ENCODE measurements at regions of chr11 and their contacts with region 1.

Region 1: DNA sequence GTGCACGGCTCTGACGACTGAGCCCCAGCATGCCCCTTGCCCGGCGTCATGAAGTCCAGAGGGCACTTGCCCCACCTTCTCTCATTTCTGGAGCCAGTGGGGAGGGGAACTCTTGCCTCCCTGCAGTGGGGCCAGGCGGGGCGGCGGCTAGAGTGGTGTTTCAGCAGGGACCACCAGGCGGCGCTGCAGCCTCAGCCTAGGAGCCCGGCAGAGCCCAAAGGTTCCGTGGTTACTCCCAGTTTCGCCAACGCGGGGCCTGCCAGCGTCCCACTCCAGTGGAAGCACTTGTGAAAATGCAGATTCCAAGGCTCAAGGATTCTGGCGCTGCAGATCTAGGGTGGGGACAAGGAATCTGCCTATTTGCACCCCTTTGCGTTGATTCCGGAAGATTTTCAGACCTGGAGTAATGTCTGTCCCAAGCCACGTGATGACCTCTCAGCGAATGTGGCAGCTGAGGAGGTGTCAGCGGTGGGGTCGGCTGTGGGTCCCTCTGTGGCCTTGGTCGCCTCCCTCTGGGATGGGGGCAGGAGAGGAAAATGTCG is 55.7 kb downstream of the CD82 start:
- DNase-seq: peak; percentile 74
- H3K4me3 ChIP-seq: peak overlapping the region; percentile 17
- H3K27ac ChIP-seq: no peak overlapping the region
- H3K4me1 ChIP-seq: no peaks in the 10 kb centered on the region
- H3K27me3 ChIP-seq: no peaks in the 10 kb centered on the region
- CTCF ChIP-seq: peak; percentile 96

Region 2: DNA sequence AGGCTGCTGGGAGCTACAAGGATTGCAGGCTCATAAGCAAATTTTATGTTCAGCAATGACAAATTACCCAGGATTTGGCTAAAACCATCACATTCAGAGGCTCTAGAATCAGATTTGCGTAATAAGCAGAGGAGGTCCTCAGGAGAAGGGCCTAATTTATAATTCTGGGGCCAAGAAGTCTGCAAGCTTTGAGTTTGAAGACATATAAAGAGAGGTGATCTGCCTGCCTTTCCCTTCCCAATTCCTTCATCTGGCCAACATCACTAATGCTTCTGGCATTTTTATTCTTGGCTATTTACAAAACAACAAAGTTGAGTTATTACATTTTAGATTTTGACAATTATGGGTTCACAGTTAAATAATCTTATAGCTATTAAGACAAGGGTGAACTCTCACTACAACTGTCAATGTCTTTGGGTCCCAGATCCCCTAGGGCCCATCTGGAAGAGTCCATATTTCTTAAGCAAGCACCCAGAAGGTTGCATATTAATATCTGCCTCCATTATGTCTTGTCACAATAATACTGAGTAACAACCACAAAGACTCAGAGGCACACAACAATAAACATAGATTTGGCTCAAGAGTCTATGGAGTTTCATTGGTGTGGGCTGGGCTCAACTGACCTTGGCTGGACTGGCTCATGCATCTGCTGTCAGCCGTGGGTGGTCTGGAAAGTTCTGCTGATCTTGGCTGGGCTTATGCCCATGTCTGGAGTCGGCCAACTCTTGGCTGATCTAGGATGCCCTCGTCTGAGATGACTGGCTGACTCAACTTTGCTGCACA is 122.9 kb before region 1 on chr11:
- intact Hi-C with region 1: no loop called
- DNase-seq: no peak
- H3K4me3 ChIP-seq: no peak overlapping the region
- H3K27ac ChIP-seq: no peak overlapping the region
- H3K4me1 ChIP-seq: no peaks in the 10 kb centered on the region
- H3K27me3 ChIP-seq: no peaks in the 10 kb centered on the region
- CTCF ChIP-seq: no peak

Region 3: GRCh38 chr11:44556735-44557409 is 64.3 kb before region 1 on chr11:
- intact Hi-C with region 1: loop called (anchors 2 kb)
- DNase-seq: peak; percentile 72
- H3K4me3 ChIP-seq: no peak overlapping the region
- H3K27ac ChIP-seq: no peak overlapping the region
- H3K4me1 ChIP-seq: no peaks in the 10 kb centered on the region
- H3K27me3 ChIP-seq: no peaks in the 10 kb centered on the region
- CTCF ChIP-seq: peak; percentile 69

Region 4: DNA sequence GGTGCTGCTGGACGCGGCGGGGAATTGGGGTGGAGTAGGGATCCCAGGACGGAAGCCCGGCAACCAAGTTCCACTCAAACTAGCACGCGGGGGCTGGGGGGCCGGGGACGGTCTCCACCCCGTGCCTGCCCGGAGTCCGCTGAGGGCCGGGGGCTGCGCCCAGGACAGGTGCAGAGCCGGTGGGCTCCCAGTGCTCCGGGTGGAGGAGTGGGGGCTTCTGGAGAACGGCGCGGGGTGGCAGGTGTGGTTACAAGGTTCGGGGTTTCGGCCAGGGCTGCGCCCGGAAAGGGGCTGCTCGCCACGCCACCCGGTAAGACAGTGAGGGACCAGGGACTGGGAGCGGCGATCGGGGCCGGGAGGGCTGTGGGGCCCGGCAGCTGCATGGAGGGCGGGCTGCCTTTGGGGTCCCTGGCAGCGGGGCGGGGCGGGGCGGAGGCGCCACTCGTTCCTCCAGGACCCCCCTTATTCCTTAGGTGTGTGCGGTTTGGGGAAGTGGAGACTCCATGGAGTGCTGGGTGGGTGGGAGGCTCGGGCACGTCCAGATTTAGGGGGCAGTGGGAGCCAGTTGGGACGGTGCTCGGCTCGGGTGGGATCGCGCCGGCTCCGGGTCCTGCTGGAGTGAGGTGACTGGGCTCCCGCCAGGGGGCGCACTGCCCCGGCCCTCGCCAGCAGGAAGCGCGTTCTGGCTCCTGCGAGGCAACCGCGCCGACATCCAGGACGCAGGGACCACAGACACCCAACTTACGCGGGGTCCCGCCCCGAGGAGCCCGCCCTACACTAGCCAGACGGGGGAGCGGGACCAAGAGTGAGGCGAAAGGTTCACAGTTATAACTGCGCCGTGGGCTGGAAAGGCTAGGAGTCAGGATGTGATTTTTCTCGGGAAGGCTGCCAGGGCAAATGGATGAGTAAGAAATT is 106.4 kb after region 1 on chr11:
- intact Hi-C with region 1: loop called (anchors 10 kb)
- DNase-seq: peak; percentile 75
- H3K4me3 ChIP-seq: peak overlapping the region; percentile 54
- H3K27ac ChIP-seq: no peak overlapping the region
- H3K4me1 ChIP-seq: no peaks in the 10 kb centered on the region
- H3K27me3 ChIP-seq: peaks cover 4% of the 10 kb centered on the region
- CTCF ChIP-seq: peak; percentile 93

Region 5: GRCh38 chr11:44747316-44747715 is 126.1 kb after region 1 on chr11:
- intact Hi-C with region 1: no loop called
- DNase-seq: no peak
- H3K4me3 ChIP-seq: no peak overlapping the region
- H3K27ac ChIP-seq: no peak overlapping the region
- H3K4me1 ChIP-seq: no peaks in the 10 kb centered on the region
- H3K27me3 ChIP-seq: no peaks in the 10 kb centered on the region
- CTCF ChIP-seq: no peak

Region 6: GRCh38 chr11:44775366-44775984 is 154.3 kb after region 1 on chr11:
- intact Hi-C with region 1: loop called (anchors 5 kb)
- DNase-seq: peak; percentile 64
- H3K4me3 ChIP-seq: no peak overlapping the region
- H3K27ac ChIP-seq: no peak overlapping the region
- H3K4me1 ChIP-seq: no peaks in the 10 kb centered on the region
- H3K27me3 ChIP-seq: no peaks in the 10 kb centered on the region
- CTCF ChIP-seq: peak; percentile 73

Region 7: GRCh38 chr11:44893846-44894617 is 272.8 kb after region 1 on chr11:
- intact Hi-C with region 1: loop called (anchors 5 kb)
- DNase-seq: peak; percentile 50
- H3K4me3 ChIP-seq: no peak overlapping the region
- H3K27ac ChIP-seq: peak overlapping the region; percentile 24
- H3K4me1 ChIP-seq: no peaks in the 10 kb centered on the region
- H3K27me3 ChIP-seq: no peaks in the 10 kb centered on the region
- CTCF ChIP-seq: peak; percentile 70

Region 8: DNA sequence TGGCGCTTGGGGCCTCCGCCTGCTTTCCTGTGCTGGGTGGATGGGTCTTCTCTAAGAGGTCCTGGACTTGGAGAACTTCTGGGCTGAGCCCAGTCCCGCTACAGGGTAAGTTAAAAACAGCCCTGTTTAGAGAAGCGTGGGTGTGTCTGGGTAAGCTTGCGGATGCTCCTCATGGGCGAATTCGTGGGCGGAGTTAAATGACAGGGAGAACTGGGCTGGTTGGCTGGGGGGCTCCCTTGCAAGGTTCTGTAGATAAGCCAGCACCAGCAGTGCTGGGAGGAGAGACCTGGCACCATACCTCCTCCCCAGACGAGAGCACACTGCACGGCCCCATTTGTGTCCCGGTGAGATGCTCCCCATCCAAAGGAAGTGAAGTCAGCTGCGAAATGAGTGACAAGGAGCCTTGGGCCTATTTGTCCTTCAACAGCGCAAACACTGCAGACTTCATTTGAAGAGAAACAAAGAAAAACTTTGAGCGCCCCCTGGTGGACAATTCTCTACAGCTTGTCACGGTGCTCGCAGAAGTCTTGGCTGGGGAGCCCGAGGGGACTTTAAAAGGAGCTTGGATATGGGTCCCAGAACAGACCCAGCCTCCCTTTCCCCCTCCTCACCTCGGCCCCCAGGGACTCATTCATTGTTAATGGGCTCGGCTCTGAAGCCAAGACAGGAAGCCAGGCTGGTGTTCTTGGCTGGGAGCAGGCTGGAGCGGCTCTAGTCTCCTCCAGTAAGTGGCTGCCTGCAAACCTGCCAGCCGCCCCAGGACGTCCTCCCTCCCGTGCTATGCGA is 290.0 kb after region 1 on chr11:
- intact Hi-C with region 1: loop called (anchors 2 kb)
- DNase-seq: peak; percentile 91
- H3K4me3 ChIP-seq: no peak overlapping the region
- H3K27ac ChIP-seq: no peak overlapping the region
- H3K4me1 ChIP-seq: no peaks in the 10 kb centered on the region
- H3K27me3 ChIP-seq: no peaks in the 10 kb centered on the region
- CTCF ChIP-seq: peak; percentile 80